GM13976 (cell line): ENCODE measurements at regions of chr22 and their contacts with region 1.

Region 1: GRCh38 chr22:50157709-50158375 is 12.7 kb upstream of the PANX2 start:
- DNase-seq: no peak
- CTCF ChIP-seq: no peak

Region 2: GRCh38 chr22:50200461-50201190 is 42.8 kb after region 1 on chr22 and contains the start of gene SELENOO:
- in situ Hi-C with region 1: loop called (anchors 10 kb)
- DNase-seq: peak; percentile 99
- CTCF ChIP-seq: no peak

Region 3: DNA sequence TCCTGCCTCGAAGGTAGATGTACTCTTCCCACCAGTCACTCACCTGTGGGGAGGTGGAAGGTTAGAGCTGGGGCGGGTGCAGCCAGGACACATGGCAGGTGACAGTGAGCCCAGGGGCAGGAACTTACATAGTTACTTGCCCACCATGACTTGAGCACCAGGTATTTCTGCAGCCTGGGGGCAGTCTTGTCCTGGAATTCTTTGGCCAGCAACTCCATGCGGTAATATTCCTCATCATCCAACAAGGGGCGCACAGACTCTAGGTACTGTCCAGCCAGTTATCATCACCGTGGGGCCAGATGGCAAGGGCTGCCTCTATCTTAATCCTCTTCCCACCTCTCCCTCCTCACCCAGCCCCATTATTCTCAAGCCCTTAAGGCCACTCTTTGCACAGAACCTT is 418.2 kb after region 1 on chr22:
- in situ Hi-C with region 1: no loop called
- DNase-seq: no peak
- CTCF ChIP-seq: no peak